HCT116 (cell line): ENCODE measurements at regions of chr1 and their contacts with region 1.

Region 1: GRCh38 chr1:116151739-116152576 is 40.8 kb downstream of the MAB21L3 start:
- DNase-seq: peak; percentile 26
- ATAC-seq: peak; percentile 98
- H3K4me3 ChIP-seq: peak overlapping the region; percentile 45 to 59
- H3K27ac ChIP-seq: peak overlapping the region; percentile 58; the same call in 1 of the 2 replicates
- H3K4me1 ChIP-seq: peaks cover 0 to 13% of the 10 kb centered on the region in 2 experiments; a peak in 2 of 4 replicates
- H3K27me3 ChIP-seq: no peaks in the 10 kb centered on the region
- CTCF ChIP-seq: peak; percentile 73 to 91 (median 89)
- POLR2A ChIP-seq: peak; percentile 25
- RAD21 ChIP-seq: peak; percentile 85

Region 2: GRCh38 chr1:116139592-116140134 is 12.3 kb before region 1 on chr1:
- CTCF ChIA-PET with region 1: interaction called, 28 read pairs
- POLR2A ChIA-PET with region 1: no interaction called
- RAD21 ChIA-PET with region 1: interaction called, 5 read pairs
- intact Hi-C with region 1: no loop called
- DNase-seq: no peak
- ATAC-seq: no peak
- H3K4me3 ChIP-seq: no peak overlapping the region
- H3K27ac ChIP-seq: no peak overlapping the region
- H3K4me1 ChIP-seq: peaks cover 2 to 8% of the 10 kb centered on the region in 2 experiments; a peak in 2 of 4 replicates
- H3K27me3 ChIP-seq: no peaks in the 10 kb centered on the region
- CTCF ChIP-seq: no peak
- POLR2A ChIP-seq: no peak
- RAD21 ChIP-seq: no peak

Region 3: DNA sequence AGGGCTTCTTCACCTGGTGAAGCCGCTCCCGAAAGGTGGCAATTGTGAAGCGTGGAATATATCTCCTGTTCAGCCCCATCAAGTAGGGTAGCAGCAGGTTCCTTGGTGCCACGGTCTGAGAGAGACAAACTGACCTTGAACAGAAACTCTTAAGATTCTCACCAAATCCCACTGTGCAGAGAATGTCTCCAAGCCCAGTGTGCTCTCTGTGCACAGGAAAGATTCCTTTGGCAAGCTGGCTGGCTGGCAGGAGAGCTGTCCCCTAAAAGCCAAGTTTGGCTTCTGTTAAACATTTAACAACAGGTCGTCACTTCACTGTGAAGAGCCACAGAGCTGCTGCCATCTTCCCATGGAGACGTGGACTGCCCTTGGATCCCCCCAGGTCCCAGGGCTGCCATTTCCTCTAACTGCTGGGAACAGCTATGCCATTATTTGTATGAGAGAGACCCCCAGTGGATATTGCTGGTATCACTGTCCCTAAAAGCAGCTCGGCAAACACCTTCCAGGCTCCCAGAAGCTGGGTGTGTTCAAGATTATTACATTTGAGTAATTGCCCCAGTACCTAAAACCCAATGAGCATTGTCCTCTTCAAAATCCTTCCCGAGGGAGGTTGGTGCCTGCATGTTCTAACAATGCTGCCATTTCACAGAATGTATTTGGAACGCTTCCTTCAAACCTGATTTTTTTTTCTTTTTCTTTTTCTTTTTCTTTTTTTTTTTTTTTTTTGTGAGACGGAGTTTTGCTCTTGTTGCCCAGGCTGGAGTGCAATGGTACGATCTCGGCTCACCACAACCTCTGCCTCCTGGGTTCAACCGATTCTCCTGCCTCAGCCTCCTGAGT is 347.1 kb after region 1 on chr1:
- CTCF ChIA-PET with region 1: interaction called, 25 read pairs
- POLR2A ChIA-PET with region 1: no interaction called
- RAD21 ChIA-PET with region 1: interaction called in 1 of 2 experiments, 4 read pairs
- intact Hi-C with region 1: no loop called
- DNase-seq: peak; percentile 55
- ATAC-seq: peak; percentile 95
- H3K4me3 ChIP-seq: no peak overlapping the region
- H3K27ac ChIP-seq: no peak overlapping the region
- H3K4me1 ChIP-seq: peaks cover 6 to 15% of the 10 kb centered on the region in 2 experiments
- H3K27me3 ChIP-seq: no peaks in the 10 kb centered on the region
- CTCF ChIP-seq: peak; percentile 71 to 96 (median 87)
- POLR2A ChIP-seq: no peak
- RAD21 ChIP-seq: peak; percentile 97